Upper lobe of right lung (tissue), 1 donor: ENCODE measurements at regions of chr16 and their contacts with region 1.

Region 1: GRCh38 chr16:813204-813915 is 12.8 kb upstream of the GNG13 start:
- DNase-seq: no peak
- ATAC-seq: peak; percentile 77
- H3K4me3 ChIP-seq: no peak overlapping the region
- H3K27ac ChIP-seq: no peak overlapping the region
- H3K4me1 ChIP-seq: no peaks in the 10 kb centered on the region
- H3K27me3 ChIP-seq: peaks cover 61% of the 10 kb centered on the region
- CTCF ChIP-seq: peak; percentile 43

Region 2: GRCh38 chr16:1054660-1055556 is 241.5 kb after region 1 on chr16:
- intact Hi-C with region 1: loop called (anchors 10 kb)
- DNase-seq: peak; percentile 78
- ATAC-seq: peak; percentile 67
- H3K4me3 ChIP-seq: no peak overlapping the region
- H3K27ac ChIP-seq: no peak overlapping the region
- H3K4me1 ChIP-seq: no peaks in the 10 kb centered on the region
- H3K27me3 ChIP-seq: peaks cover 23% of the 10 kb centered on the region
- CTCF ChIP-seq: peak; percentile 70